ENCODE measurements at regions of chr3 and their contacts with region 1.

Region 1: GRCh38 chr3:103470498-103470897 is 1035.7 kb downstream of the ZPLD1 start:
- DNase-seq: no peak
- H3K4me3 ChIP-seq: no peak overlapping the region
- H3K27ac ChIP-seq: no peak overlapping the region
- H3K4me1 ChIP-seq: no peaks in the 10 kb centered on the region
- H3K27me3 ChIP-seq: no peaks in the 10 kb centered on the region
- CTCF ChIP-seq: no peak
- POLR2A ChIP-seq: no peak

Region 2: GRCh38 chr3:103446953-103447629 is 23.4 kb before region 1 on chr3:
- intact Hi-C with region 1: no loop called
- DNase-seq: no peak
- H3K4me3 ChIP-seq: no peak overlapping the region
- H3K27ac ChIP-seq: no peak overlapping the region
- H3K4me1 ChIP-seq: no peaks in the 10 kb centered on the region
- H3K27me3 ChIP-seq: no peaks in the 10 kb centered on the region
- CTCF ChIP-seq: no peak
- POLR2A ChIP-seq: no peak

Region 3: DNA sequence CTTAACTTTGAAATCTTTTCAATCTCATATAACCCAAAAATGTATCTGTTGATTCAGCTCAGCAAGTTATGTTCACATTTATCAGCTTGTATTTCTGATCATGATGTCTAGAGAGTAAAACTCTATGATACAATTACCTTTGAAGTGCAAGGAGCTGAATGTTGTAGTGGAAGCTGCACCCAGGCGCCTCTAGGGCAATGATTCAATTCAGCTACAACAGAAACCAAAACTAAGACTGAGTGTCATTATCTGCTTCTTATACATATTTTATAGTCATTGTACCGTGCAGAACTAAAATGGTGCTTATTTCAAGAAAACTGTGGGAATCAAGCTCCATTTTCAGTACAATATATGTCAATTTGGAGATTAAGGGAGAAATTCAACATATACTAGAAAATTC is 201.8 kb after region 1 on chr3:
- intact Hi-C with region 1: loop called (anchors 5 kb)
- DNase-seq: no peak
- H3K4me3 ChIP-seq: no peak overlapping the region
- H3K27ac ChIP-seq: no peak overlapping the region
- H3K4me1 ChIP-seq: no peaks in the 10 kb centered on the region
- H3K27me3 ChIP-seq: no peaks in the 10 kb centered on the region
- CTCF ChIP-seq: no peak
- POLR2A ChIP-seq: no peak

Measured in breast epithelium (tissue), 4 donors.